ENCODE measurements at regions of chr6 and their contacts with region 1.

Region 1: GRCh38 chr6:22892452-22892851 is 323.1 kb downstream of the HDGFL1 start:
- DNase-seq: peak; percentile 95
- H3K4me3 ChIP-seq: no peak overlapping the region
- H3K27me3 ChIP-seq: no peaks in the 10 kb centered on the region
- CTCF ChIP-seq: no peak

Region 2: GRCh38 chr6:22906091-22906555 is 13.7 kb after region 1 on chr6:
- CTCF ChIA-PET with region 1: interaction called, 10 read pairs
- POLR2A ChIA-PET with region 1: no interaction called
- DNase-seq: no peak
- H3K4me3 ChIP-seq: no peak overlapping the region
- H3K27me3 ChIP-seq: no peaks in the 10 kb centered on the region
- CTCF ChIP-seq: peak; percentile 36

Region 3: DNA sequence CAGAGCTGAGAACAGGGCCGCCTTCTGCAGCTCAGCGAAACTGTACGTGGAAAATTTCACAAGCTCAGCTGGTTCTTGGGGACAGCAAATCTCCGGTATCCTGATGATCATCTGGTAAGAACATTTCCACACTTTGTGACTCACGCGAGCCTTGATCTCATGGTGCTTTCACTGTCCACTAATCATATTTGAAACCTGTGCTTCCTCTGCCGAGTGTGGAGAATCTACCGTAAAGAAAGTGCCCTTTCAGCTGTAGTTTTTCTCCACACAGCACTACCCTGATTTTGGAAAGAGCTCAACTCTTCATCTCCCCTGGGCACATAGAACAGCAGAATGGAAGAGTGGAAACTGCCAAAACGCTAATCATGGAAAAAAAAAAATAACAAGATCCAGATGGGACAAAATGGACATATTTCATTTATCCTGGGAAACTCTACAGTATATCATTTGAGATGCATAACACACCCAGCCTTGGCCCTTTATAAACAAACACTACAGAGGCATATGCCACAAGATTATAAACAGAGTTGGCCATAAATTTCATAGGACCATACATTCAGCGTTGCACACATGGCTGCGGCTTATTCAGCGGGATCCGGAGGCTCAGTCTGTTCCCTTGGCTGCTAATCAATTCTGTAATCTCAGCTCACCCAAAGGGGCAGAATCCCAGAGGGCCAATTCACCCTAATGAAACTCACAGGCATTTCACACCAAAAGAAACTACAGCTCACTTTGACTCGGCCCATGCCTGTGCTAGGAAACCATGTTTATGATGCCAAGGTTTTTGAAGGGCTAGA is 111.4 kb after region 1 on chr6:
- CTCF ChIA-PET with region 1: no interaction called
- POLR2A ChIA-PET with region 1: no interaction called
- DNase-seq: peak; percentile 65
- H3K4me3 ChIP-seq: no peak overlapping the region
- H3K27me3 ChIP-seq: no peaks in the 10 kb centered on the region
- CTCF ChIP-seq: no peak